PC-3 (cell line): ENCODE measurements at regions of chr19 and their contacts with region 1.

Region 1: GRCh38 chr19:50933640-50934039 is 19.2 kb downstream of the KLK5 start:
- DNase-seq: peak; percentile 96
- ATAC-seq: peak; percentile 39
- H3K4me3 ChIP-seq: no peak overlapping the region
- H3K27ac ChIP-seq: peak overlapping the region; percentile 88
- H3K4me1 ChIP-seq: peaks cover 38% of the 10 kb centered on the region
- H3K27me3 ChIP-seq: no peaks in the 10 kb centered on the region
- CTCF ChIP-seq: no peak

Region 2: GRCh38 chr19:50977626-50978025 is 44.0 kb after region 1 on chr19:
- CTCF ChIA-PET with region 1: no interaction called
- POLR2A ChIA-PET with region 1: interaction called, 3 read pairs
- intact Hi-C with region 1: loop called (anchors 2 kb)
- DNase-seq: peak; percentile 42
- ATAC-seq: no peak
- H3K4me3 ChIP-seq: no peak overlapping the region
- H3K27ac ChIP-seq: no peak overlapping the region
- H3K4me1 ChIP-seq: peaks cover 40% of the 10 kb centered on the region
- H3K27me3 ChIP-seq: no peaks in the 10 kb centered on the region
- CTCF ChIP-seq: no peak

Region 3: DNA sequence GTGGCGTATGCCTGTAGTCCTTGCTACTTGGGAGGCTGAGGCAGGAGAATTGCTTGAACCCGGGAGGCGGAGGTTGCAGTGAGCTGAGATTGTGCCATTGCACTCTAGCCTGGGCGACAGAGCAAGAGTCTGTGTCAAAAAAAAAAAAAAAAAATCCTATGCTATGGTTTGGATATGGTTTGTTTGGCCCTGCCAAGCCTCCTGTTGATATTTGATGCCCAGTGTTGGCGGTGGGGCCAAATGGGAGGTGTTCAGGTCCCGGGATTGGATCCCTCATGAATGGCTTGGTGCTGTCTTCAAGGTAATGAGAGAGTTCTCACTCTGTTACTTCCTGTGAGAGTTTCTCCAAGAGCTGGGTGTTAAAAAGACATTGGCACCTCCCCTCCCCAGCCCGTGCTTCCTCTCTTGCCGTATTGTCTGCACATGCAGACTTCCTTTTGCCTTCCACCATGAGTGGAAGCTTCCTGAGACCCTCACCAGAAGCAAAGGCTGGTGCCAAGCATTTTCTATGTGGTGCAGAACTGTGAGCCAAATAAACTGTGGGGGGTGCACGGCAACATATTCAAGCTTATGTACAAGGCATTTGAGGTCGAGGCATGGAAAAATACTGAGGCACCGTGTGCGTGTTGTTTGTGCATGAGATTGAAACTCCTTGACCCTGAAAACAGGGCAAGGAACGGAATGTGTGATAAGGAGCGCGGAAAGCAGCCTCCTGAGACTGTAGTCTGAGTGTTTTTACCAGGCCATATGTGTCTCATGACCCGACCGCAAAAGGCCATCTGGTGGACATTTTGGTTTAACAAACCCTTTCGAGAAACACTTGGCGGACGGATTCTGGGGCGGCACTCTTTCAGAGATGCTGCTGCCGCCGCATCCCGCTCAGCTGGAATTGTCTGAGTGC is 198.4 kb after region 1 on chr19:
- CTCF ChIA-PET with region 1: no interaction called
- POLR2A ChIA-PET with region 1: no interaction called
- intact Hi-C with region 1: no loop called
- DNase-seq: no peak
- ATAC-seq: no peak
- H3K4me3 ChIP-seq: no peak overlapping the region
- H3K27ac ChIP-seq: no peak overlapping the region
- H3K4me1 ChIP-seq: peaks cover 25% of the 10 kb centered on the region
- H3K27me3 ChIP-seq: peaks cover 29% of the 10 kb centered on the region
- CTCF ChIP-seq: no peak; the same call in 1 of the 2 replicates

Region 4: DNA sequence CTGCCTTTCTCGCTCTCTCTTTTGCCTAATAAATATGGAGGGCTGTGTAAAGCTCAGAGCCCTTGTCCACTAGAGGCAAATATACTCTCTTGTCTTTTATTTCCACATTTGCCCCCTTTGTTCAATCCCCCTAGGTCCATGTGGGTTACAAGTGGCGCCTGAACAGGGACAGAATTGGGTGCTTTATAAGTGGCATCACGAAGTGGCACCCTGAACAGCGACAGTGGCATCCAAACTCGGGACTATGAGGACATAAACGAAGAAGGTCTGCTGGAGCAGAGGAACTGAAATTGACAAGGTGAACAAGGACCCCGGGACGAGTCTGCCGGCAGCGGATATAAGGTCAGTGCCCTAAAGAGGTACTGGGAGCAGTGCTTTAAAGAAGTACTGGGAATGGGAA is 1398.1 kb after region 1 on chr19:
- CTCF ChIA-PET with region 1: no interaction called
- POLR2A ChIA-PET with region 1: no interaction called
- intact Hi-C with region 1: no loop called
- DNase-seq: no peak
- ATAC-seq: no peak
- H3K4me3 ChIP-seq: no peak overlapping the region
- H3K27ac ChIP-seq: no peak overlapping the region
- H3K4me1 ChIP-seq: no peaks in the 10 kb centered on the region
- H3K27me3 ChIP-seq: no peaks in the 10 kb centered on the region
- CTCF ChIP-seq: no peak